ENCODE measurements at regions of chr7 and their contacts with region 1.

Region 1: GRCh38 chr7:117034851-117035464 is 81.7 kb downstream of the ST7 start:
- DNase-seq: no peak
- CTCF ChIP-seq: no peak

Region 2: DNA sequence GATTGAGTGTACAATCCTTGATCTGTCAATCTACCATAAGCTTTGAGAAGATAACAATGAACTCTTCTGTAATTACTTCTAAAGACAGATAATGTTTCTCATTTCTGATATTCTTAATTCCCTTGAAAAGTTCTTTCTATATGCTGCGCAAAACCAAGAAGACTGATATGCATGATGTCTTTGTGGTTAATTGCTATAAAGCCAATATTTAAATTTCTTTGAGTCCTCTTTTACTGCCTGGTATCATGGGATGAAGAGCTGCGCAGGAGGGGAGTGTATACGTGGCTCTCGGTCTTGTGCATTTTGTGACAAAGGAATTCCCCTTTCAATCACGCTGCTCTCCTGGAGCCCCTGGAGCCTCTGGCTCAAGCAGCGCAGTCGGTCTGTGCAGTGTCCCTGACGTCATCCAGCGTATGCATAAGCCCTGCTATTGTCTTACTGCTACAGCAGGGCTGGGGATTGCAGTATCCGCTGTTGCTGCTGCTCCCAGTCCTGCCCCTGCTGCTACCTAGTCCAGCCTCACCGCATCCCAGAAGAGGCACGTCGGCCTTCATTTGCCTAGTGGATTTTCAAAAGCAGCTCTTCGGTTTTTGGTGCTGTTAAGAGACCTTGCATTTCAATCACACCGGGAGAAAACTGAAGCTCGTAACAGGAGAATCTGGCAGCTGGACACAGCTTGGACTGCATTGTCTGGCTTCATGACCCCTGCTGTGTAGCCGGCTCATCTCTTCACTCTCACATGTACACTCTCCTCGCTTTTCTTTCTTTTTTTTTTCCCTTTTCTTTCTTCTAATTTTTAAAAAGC is 15.0 kb before region 1 on chr7:
- CTCF ChIA-PET with region 1: interaction called, 14 read pairs
- POLR2A ChIA-PET with region 1: no interaction called
- DNase-seq: no peak
- CTCF ChIP-seq: no peak

Region 3: GRCh38 chr7:117051808-117052207 is 16.9 kb after region 1 on chr7:
- CTCF ChIA-PET with region 1: interaction called, 17 read pairs
- POLR2A ChIA-PET with region 1: no interaction called
- DNase-seq: no peak
- CTCF ChIP-seq: no peak

Region 4: DNA sequence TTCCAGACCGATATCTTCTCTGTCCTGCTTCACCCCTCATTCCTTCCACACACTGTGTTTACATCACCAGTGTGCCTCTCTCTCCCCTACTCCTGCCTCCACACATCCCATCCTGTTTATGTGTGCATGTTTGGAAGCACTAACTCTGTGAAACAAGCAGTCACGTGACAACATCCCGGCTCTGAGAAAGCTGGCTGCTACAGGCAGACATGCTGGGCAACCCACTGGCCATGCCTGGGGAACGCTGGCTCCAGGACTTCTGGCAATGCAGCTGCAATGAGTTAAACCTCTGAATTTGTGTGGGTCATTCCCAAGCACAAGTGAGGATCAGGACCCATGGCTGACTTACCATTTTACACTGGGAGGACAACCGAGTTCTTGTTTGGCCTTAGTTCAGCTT is 213.9 kb after region 1 on chr7:
- CTCF ChIA-PET with region 1: no interaction called
- POLR2A ChIA-PET with region 1: no interaction called
- DNase-seq: no peak
- CTCF ChIP-seq: no peak

Measured in GM10248 (cell line).